Activated CD4-positive, alpha-beta memory T cell treated with anti-CD3 and anti-CD28 coated beads for 36 hours (primary cell): ENCODE measurements at regions of chr12 and their contacts with region 1.

Region 1: GRCh38 chr12:92469837-92470236 is 233.0 kb upstream of the PLEKHG7 start:
- DNase-seq: no peak
- H3K4me3 Mint-ChIP-seq: no peak overlapping the region
- H3K27ac Mint-ChIP-seq: peak overlapping the region; percentile 83
- H3K4me1 Mint-ChIP-seq: peaks cover 38% of the 10 kb centered on the region
- H3K27me3 Mint-ChIP-seq: no peaks in the 10 kb centered on the region

Region 2: DNA sequence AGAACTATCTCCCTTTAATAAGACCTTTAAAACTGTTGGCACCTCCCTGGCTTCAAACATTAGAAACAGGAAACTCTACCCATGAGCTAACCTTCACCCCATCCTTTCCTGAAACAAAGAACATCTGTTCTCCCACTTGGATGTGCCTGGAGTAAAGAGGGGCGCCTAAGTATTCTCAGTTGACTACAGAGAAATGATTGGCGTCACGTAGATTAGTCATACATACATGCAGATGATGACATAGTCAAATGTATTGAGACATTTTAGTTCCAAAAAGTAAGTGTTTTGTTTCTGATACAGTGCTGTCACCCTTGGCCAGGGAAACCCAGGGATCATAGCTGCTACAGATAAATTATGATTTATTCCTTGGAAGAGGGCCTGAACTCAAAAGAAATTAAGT is 27.1 kb before region 1 on chr12:
- CTCF ChIA-PET with region 1: no interaction called
- POLR2A ChIA-PET with region 1: no interaction called
- intact Hi-C with region 1: loop called (anchors 1 kb)
- DNase-seq: no peak
- H3K4me3 Mint-ChIP-seq: no peak overlapping the region
- H3K27ac Mint-ChIP-seq: peak overlapping the region; percentile 39
- H3K4me1 Mint-ChIP-seq: peaks cover 26% of the 10 kb centered on the region
- H3K27me3 Mint-ChIP-seq: no peaks in the 10 kb centered on the region

Region 3: GRCh38 chr12:92539113-92539749 is 69.4 kb after region 1 on chr12:
- CTCF ChIA-PET with region 1: no interaction called
- POLR2A ChIA-PET with region 1: no interaction called
- intact Hi-C with region 1: no loop called
- DNase-seq: peak; percentile 56
- H3K4me3 Mint-ChIP-seq: no peak overlapping the region
- H3K27ac Mint-ChIP-seq: peak overlapping the region; percentile 90
- H3K4me1 Mint-ChIP-seq: peaks cover 63% of the 10 kb centered on the region
- H3K27me3 Mint-ChIP-seq: no peaks in the 10 kb centered on the region

Region 4: DNA sequence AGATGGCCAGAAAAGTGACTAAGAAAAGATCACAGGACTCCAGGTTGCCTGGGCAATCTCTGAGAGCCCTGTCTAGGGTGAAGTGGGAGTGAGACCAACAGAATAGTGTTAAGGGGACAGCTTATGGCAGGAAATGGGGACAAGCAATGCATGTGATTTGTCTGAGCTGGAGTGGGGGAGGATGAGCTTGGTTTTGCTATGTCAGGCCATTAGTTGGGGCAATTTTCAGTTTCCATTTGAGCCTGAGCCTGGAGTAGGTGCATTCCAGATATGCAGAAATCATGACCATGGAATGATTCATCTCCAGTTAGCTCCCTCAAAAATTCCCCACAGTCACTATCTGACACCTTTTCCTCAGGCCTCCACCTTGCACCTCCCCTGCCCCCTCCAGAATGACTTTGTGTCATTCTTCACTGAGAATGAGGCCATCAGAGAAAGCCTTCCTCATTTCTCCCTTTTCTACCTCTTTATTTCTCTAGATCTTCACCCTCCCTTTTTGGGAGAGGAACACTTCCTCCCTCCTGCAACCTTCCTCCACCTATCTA is 82.1 kb after region 1 on chr12:
- CTCF ChIA-PET with region 1: no interaction called
- POLR2A ChIA-PET with region 1: no interaction called
- intact Hi-C with region 1: loop called (anchors 1 kb)
- DNase-seq: peak; percentile 75
- H3K4me3 Mint-ChIP-seq: no peak overlapping the region
- H3K27ac Mint-ChIP-seq: no peak overlapping the region
- H3K4me1 Mint-ChIP-seq: peaks cover 25% of the 10 kb centered on the region
- H3K27me3 Mint-ChIP-seq: no peaks in the 10 kb centered on the region

Region 5: DNA sequence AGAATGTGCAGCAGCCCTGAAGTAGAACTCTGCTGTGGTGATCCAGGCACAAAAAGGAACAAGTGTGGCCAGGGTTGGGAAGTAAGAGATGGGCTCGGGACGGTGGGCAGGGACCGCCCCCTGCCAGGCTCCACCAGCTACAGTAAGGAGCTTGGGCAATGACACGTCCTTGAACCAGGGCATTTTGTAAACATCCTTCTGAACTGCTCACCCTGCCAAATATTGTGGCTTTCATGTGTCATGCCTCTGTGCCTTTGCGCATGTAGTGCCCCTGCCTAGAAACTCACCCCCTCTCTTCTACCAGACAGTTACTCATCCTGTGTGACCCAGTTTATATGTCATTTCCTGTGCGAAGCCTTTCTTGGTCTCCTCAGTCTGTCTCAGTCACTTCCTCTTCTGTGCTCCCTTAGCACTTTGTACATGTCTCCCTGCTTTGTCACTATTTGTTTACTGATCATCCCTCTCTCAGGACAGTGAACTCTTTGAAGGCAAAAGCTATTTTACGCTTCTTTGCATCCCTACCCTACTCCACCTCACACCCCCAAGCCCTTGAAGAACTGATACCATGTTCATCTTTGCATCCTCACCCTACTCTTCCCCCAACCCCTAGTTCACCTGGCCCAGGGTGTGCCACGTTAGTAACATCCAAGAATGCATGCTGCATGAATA is 124.0 kb after region 1 on chr12:
- CTCF ChIA-PET with region 1: no interaction called
- POLR2A ChIA-PET with region 1: no interaction called
- intact Hi-C with region 1: loop called (anchors 1 kb)
- DNase-seq: peak; percentile 87
- H3K4me3 Mint-ChIP-seq: peak overlapping the region; percentile 25
- H3K27ac Mint-ChIP-seq: peak overlapping the region; percentile 92
- H3K4me1 Mint-ChIP-seq: peaks cover 80% of the 10 kb centered on the region
- H3K27me3 Mint-ChIP-seq: no peaks in the 10 kb centered on the region

Region 6: DNA sequence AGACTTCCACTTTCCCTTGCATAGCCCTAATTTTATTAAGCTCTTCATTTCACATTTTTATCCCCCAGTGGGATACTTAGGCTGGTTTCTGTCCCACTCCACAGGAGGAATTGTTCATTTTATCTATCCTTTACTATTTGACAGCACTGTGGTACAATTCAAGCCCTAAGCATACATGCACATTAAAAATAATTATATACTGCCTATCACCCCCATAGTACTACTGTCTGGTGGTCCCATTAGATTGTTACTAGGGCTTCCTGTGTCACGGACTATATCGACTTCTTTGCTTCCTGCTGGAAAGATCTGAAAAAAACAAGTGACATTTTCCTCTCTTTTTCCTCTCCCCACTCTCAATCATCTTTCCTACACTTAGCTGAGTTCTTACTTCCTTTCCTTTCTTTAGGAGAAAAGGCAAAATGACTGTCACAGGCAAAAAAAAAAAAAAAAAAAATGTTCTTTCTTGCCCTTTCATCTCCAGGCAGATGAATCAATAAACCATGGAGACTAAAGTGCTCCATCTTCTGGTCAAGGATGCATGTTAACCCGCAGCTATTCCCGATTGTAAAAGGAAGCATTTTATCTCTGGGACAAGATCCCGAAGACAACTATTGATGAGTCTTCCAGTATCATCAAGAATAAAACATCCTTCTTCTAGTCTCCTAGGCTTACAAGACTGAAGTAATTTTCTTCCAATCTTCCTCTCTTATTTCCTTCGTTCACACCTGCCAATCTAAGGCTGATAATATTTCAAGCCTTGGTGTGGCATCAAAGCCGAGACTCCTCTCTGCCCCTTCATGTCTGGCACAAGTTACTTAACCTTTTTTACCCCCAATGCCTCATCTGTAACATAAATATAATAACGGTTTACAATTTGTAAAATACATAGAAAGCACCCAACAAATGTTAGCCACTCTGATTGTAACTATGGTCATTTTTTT is 138.6 kb after region 1 on chr12:
- CTCF ChIA-PET with region 1: no interaction called
- POLR2A ChIA-PET with region 1: no interaction called
- intact Hi-C with region 1: loop called (anchors 1 kb)
- DNase-seq: no peak
- H3K4me3 Mint-ChIP-seq: no peak overlapping the region
- H3K27ac Mint-ChIP-seq: peak overlapping the region; percentile 28
- H3K4me1 Mint-ChIP-seq: peaks cover 27% of the 10 kb centered on the region
- H3K27me3 Mint-ChIP-seq: no peaks in the 10 kb centered on the region